Posterior vena cava (tissue), 2 donors: ENCODE measurements at regions of chr17 and their contacts with region 1.

Region 1: GRCh38 chr17:49210158-49211029 is at the starts of genes ABI3 and GNGT2:
- DNase-seq: no peak
- total RNA-seq, gene ABI3: 10.6 TPM
- total RNA-seq, gene GNGT2: 2.1 to 2.3 TPM

Region 2: DNA sequence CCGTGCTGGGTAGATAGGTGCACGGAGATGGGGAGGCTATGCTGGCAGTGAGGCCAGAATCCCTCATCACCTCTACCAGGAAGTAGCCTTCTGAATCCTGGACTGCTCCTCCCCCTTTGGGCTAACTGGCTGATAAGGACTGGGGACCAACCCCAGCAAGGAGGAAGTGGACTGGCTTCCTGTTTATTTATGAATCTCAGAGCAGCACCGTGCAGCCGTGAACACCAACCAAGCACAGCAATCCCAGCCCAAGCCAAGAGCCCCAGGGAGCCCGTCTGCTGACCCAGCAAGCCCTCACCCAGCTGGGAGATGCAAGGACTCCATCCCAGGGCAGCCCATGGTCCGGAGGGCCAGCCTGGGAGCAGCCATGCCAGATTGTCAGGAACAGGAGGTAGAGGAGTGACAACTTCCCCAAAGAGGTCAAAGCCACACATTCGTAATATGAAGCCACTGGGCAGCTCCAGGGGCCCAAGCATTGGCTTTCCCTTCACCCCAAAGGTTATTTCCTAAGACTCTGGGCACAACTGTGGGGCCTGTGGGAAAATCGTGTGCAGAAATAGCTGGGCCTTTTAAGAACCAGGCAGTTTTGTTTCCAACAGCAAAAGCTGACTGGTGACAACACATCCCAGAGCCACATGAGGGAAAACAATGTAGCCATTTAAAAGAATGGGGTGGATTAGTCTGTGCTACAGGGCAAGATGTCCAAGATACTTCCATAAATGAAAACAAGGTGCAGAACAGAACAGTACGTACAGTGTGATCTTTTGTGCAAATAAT is 180.3 kb after region 1 on chr17:
- intact Hi-C with region 1: loop called in 1 of 2 experiments (anchors 10 kb)
- DNase-seq: no peak

Region 3: DNA sequence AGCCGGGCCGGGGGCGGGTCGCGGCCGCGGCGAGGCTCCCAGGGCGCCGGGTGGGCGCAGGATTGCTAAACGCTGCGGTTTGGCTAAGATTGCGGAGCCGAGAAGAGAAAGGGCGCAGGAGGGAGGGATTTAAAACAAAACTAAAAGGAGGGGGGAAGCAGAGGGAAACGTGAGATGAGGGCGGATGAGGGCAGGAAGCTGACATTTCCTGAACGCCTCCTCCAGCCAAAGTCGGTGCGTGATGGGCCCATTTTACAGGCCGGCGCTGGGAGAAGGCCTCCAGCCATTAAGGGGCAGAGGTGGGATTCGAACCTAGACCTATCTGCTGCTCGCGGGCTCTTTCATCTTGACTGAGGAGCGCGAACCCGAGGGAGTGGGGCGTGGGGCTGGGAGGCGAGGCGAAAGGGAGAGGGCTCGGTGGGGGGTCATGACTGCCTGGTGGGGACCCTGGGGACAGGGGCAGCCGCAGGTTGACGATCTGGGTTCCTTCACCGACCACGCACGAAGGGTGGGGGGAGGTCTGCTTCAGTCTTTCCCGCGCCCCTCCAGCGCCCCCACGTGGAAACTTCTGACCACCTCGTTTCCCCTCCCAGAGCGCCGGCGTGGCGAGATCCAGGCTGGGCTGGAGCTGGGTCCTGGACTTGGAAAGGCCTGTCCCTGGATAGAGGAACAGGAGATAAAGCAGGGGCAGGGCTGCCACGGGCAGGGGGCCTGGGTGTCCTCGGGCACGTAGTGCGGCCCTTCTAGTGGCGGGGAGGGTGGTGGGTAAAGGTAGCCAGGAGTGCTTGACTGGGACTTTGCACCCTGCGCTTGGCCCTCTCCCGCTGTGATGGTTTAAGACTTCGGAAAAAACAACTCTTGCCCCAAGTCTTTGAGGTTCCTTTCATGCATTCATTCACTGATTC is 641.2 kb after region 1 on chr17:
- intact Hi-C with region 1: no loop called
- DNase-seq: peak; percentile 95